ENCODE measurements at regions of chrX and their contacts with region 1.

Region 1: GRCh38 chrX:49043220-49043986 is at the start of gene TFE3:
- DNase-seq: peak; percentile 95
- ATAC-seq: peak; percentile 94
- H3K4me3 ChIP-seq: peak within 1 kb of the TSS; percentile 71
- H3K27ac ChIP-seq: peak within 1 kb of the TSS; percentile 89
- H3K4me1 ChIP-seq: peaks cover 5% of the 10 kb centered on the region; the same call in 1 of the 2 replicates
- H3K27me3 ChIP-seq: no peaks in the 10 kb centered on the region
- CTCF ChIP-seq: peak; percentile 48 to 70 (median 63)
- EP300 ChIP-seq: no peak
- POLR2A ChIP-seq: peak; percentile 45
- RAD21 ChIP-seq: peak; percentile 67
- polyA plus RNA-seq, gene TFE3: 3.5 TPM

Region 2: DNA sequence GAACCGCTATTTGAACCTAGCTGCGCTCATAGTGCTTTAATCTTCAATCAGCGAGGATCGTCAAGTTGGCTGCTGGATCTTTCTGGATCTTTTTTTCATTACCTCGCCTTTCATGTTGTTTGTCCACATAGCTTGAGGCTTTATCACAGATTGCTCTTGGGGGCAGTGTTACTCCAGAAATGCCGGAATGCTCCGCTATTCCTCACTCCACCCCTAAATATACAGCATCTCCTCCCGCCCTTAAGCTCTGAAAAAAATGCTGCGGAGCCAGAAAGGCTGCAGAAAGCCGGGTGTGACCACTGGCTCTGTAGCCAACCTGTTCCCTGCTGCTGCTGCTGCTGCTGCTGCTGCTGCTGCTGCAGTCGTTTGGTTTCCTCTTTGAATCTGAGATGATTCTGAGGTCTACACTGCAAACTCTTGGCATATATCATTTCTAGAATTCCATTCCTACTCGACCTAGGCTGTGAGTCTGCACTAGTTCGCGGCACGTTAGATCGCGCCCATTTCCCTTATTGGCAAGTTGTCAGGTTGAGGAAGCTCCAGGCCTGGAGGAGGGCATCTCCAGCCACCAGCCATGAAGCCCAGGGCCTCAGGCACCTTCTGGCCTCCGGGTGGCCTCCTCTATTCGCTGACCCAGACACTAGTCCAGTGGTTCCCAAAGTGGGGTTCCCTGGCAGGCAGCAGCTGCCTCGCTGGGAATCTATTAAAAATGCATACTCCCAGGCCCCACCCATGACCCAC is 411.9 kb before region 1 on chrX:
- CTCF ChIA-PET with region 1: no interaction called
- POLR2A ChIA-PET with region 1: no interaction called
- RAD21 ChIA-PET with region 1: no interaction called
- SMC1A ChIA-PET with region 1: no interaction called
- in situ Hi-C with region 1: no loop called
- intact Hi-C with region 1: loop called (anchors 5 kb)
- DNase-seq: peak; percentile 65
- ATAC-seq: peak; percentile 96
- H3K4me3 ChIP-seq: no peak overlapping the region
- H3K27ac ChIP-seq: no peak overlapping the region
- H3K4me1 ChIP-seq: peaks cover 4% of the 10 kb centered on the region; the same call in 1 of the 2 replicates
- H3K27me3 ChIP-seq: no peaks in the 10 kb centered on the region
- CTCF ChIP-seq: peak; percentile 19 to 57 (median 43); a peak in 4 of 6 replicates
- EP300 ChIP-seq: no peak
- POLR2A ChIP-seq: no peak
- RAD21 ChIP-seq: peak; percentile 74

Region 3: GRCh38 chrX:48897621-48898306 is 145.6 kb before region 1 on chrX and contains the starts of genes PQBP1 and TIMM17B:
- CTCF ChIA-PET with region 1: interaction called, 8 read pairs
- POLR2A ChIA-PET with region 1: interaction called, 3 read pairs
- RAD21 ChIA-PET with region 1: interaction called, 5 read pairs
- SMC1A ChIA-PET with region 1: interaction called, 4 read pairs
- in situ Hi-C with region 1: no loop called
- intact Hi-C with region 1: loop called (anchors 5 kb)
- DNase-seq: peak; percentile 92
- ATAC-seq: peak; percentile 94
- H3K4me3 ChIP-seq: peak within 1 kb of the TSS; percentile 77
- H3K27ac ChIP-seq: peak within 1 kb of the TSS; percentile 93
- H3K4me1 ChIP-seq: no peaks in the 10 kb centered on the region
- H3K27me3 ChIP-seq: no peaks in the 10 kb centered on the region
- CTCF ChIP-seq: no peak
- EP300 ChIP-seq: no peak
- POLR2A ChIP-seq: peak; percentile 86
- RAD21 ChIP-seq: no peak
- polyA plus RNA-seq, gene PQBP1: 12.5 to 28.0 TPM
- polyA plus RNA-seq, gene TIMM17B: 4.5 to 18.3 TPM

Region 4: GRCh38 chrX:48937054-48937907 is 106.1 kb before region 1 on chrX:
- CTCF ChIA-PET with region 1: no interaction called
- POLR2A ChIA-PET with region 1: interaction called, 5 read pairs
- RAD21 ChIA-PET with region 1: interaction called, 17 read pairs
- SMC1A ChIA-PET with region 1: interaction called, 3 read pairs
- in situ Hi-C with region 1: no loop called
- intact Hi-C with region 1: no loop called
- DNase-seq: peak; percentile 79
- ATAC-seq: peak; percentile 74
- H3K4me3 ChIP-seq: peak overlapping the region; percentile 28; the same call in 1 of the 2 replicates
- H3K27ac ChIP-seq: peak overlapping the region; percentile 95
- H3K4me1 ChIP-seq: peaks cover 73% of the 10 kb centered on the region
- H3K27me3 ChIP-seq: no peaks in the 10 kb centered on the region
- CTCF ChIP-seq: peak; percentile 41 to 57 (median 56); a peak in 5 of 6 replicates
- EP300 ChIP-seq: peak; percentile 97 to 98
- POLR2A ChIP-seq: peak; percentile 65
- RAD21 ChIP-seq: peak; percentile 57

Region 5: DNA sequence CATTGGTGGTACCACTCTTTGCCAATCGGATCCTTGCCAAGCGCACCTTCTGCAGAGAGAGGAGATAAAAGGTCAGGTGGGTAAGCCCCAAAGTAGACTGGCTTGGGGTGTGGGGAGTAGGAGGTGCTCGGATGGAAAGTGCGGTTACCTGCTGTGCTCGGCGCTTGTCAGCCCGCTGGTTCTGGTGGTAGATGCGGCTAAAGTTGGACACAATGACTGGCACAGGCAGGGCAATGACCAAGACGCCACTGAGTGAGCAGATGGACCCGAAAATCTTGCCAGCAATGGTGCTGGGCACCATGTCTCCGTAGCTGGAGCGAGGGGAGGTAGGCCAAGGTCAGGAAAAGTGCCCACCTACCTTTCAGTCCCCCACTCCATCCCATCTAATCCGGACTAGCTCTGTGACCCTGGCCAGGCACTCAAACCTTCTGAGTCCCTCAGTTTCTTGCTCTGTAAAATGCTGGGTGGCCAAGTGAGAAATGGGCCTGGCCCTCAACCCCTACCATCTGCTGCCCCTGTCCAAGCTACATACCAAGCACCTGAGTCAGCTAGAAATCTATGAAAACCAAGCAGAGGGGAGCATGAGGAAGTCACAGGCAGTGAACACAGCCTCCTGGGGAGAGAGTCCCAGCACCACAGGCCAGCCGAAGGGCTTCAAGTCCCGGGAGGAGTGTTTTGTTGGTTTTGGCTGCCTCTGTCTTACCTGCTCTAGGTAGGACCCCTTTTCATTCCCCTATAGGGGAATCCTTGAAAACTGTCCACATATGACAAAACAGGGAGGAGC is 76.4 kb before region 1 on chrX:
- CTCF ChIA-PET with region 1: interaction called, 16 read pairs
- POLR2A ChIA-PET with region 1: interaction called, 9 read pairs
- RAD21 ChIA-PET with region 1: no interaction called
- SMC1A ChIA-PET with region 1: interaction called, 8 read pairs
- in situ Hi-C with region 1: loop called (anchors 5 kb)
- intact Hi-C with region 1: loop called (anchors 1 kb)
- DNase-seq: no peak
- ATAC-seq: no peak
- H3K4me3 ChIP-seq: no peak overlapping the region
- H3K27ac ChIP-seq: no peak overlapping the region
- H3K4me1 ChIP-seq: peaks cover 6% of the 10 kb centered on the region
- H3K27me3 ChIP-seq: no peaks in the 10 kb centered on the region
- CTCF ChIP-seq: no peak
- EP300 ChIP-seq: no peak
- POLR2A ChIP-seq: no peak
- RAD21 ChIP-seq: no peak

Region 6: GRCh38 chrX:49002091-49002935 is 41.1 kb before region 1 on chrX and contains the start of gene GRIPAP1:
- CTCF ChIA-PET with region 1: interaction called, 6 read pairs
- POLR2A ChIA-PET with region 1: interaction called, 19 read pairs
- RAD21 ChIA-PET with region 1: interaction called, 9 read pairs
- SMC1A ChIA-PET with region 1: interaction called, 7 read pairs
- in situ Hi-C with region 1: no loop called
- intact Hi-C with region 1: loop called (anchors 5 kb)
- DNase-seq: peak; percentile 60
- ATAC-seq: peak; percentile 82
- H3K4me3 ChIP-seq: peak within 1 kb of the TSS; percentile 62
- H3K27ac ChIP-seq: peak within 1 kb of the TSS; percentile 87
- H3K4me1 ChIP-seq: no peaks in the 10 kb centered on the region; the same call in none of the 2 replicates
- H3K27me3 ChIP-seq: no peaks in the 10 kb centered on the region
- CTCF ChIP-seq: no peak
- EP300 ChIP-seq: no peak
- POLR2A ChIP-seq: peak; percentile 94
- RAD21 ChIP-seq: no peak
- polyA plus RNA-seq, gene GRIPAP1: 4.2 to 4.9 TPM

Region 7: DNA sequence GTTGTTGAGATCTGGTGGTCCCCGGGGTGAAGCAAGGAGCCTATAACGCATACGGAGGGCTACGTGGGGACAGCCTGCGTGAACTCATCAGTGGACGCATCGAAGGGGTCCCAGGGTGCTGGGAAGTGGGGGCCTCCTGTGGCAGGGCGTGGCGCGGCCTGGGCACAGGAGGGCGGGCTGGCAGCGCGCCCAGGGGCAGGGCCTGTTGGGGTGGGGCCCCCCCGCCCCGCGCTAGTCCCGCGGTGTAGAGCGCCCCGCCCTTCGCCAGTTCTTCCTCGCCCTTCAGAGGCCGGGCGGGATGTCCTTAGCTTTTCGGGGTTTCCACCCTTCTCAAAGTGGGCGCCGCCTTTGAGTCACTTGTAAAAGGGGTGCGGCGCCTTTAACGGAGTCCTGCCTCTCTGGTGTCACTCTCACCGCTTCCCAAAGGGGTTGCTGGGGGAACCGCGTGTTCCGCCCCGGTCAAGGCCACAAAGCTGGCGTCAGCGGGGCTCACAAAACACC is 128.9 kb after region 1 on chrX:
- CTCF ChIA-PET with region 1: no interaction called
- POLR2A ChIA-PET with region 1: no interaction called
- RAD21 ChIA-PET with region 1: no interaction called
- SMC1A ChIA-PET with region 1: no interaction called
- in situ Hi-C with region 1: no loop called
- intact Hi-C with region 1: no loop called
- DNase-seq: no peak
- ATAC-seq: peak; percentile 87
- H3K4me3 ChIP-seq: peak overlapping the region; percentile 73
- H3K27ac ChIP-seq: peak overlapping the region; percentile 62
- H3K4me1 ChIP-seq: peaks cover 14% of the 10 kb centered on the region; the same call in 1 of the 2 replicates
- H3K27me3 ChIP-seq: no peaks in the 10 kb centered on the region
- CTCF ChIP-seq: no peak
- EP300 ChIP-seq: no peak
- POLR2A ChIP-seq: peak; percentile 39; the same call in 1 of the 2 replicates
- RAD21 ChIP-seq: no peak